Activated CD4-positive, alpha-beta memory T cell treated with anti-CD3 and anti-CD28 coated beads for 36 hours (primary cell): ENCODE measurements at regions of chr9 and their contacts with region 1.

Region 1: DNA sequence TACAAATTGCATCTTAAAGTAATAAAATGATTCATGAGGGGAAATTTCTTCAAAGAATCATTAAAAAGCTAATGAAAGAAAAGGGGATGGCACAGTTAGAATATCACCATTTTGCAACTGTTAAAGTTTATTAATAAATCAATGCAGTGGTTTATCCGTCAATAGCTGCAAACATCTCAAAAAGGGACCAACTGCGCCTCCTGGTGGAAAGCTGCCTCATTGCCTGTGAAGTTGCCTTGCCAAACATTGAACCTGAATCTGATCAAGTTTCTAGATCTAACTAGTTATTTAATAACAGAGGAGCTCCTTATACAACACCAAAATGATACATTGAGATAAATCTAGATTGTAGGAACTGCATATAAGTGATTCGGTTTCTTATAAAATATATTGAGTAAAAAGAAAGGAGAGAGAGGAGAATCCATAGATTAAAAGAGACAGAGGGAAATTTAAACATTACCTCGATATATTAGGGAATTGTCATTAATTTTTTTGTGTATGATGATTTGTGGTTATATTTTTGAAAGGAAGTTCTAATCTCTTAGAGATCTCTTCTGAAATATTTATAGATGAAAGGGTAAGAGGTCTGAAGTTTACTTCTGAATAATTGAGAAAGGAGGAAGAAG is 6.9 kb upstream of the NDUFB6 start:
- DNase-seq: peak; percentile 84
- H3K4me3 Mint-ChIP-seq: no peak overlapping the region
- H3K27ac Mint-ChIP-seq: no peak overlapping the region
- H3K4me1 Mint-ChIP-seq: no peaks in the 10 kb centered on the region
- H3K27me3 Mint-ChIP-seq: peaks cover 14% of the 10 kb centered on the region

Region 2: GRCh38 chr9:32350682-32351081 is 229.1 kb before region 1 on chr9:
- CTCF ChIA-PET with region 1: no interaction called
- POLR2A ChIA-PET with region 1: no interaction called
- intact Hi-C with region 1: no loop called
- DNase-seq: no peak
- H3K4me3 Mint-ChIP-seq: no peak overlapping the region
- H3K27ac Mint-ChIP-seq: no peak overlapping the region
- H3K4me1 Mint-ChIP-seq: no peaks in the 10 kb centered on the region
- H3K27me3 Mint-ChIP-seq: no peaks in the 10 kb centered on the region

Region 3: DNA sequence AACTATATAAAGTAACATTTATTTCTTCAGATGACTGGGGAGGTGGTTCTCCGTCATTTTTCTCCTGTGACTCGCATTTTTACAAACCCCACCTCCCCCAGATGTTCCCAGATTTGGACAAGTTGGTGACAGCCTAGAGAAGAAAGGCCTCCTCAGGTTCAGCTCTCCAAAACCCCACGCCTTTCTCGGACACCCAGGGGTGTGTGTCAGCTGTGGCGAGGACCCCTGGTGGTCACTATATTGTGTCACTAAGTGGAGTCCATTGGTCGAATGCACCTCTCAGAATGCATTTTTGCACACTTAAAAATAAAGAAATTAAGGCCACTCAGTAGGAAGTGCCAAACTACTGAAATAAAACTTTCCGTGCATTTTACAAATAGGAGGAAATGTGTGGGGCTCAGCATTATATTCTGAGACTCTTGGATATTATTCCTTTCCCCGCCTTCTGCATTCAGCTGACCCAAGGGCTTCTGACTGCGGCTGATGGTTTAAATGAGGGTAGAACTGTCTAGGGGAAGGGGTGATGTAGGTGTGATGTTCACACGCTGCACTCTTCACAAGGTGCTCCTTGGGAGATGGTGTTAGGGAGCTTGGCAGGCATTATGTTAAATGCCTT is 147.8 kb before region 1 on chr9:
- CTCF ChIA-PET with region 1: interaction called, 12 read pairs
- POLR2A ChIA-PET with region 1: no interaction called
- intact Hi-C with region 1: no loop called
- DNase-seq: peak; percentile 28
- H3K4me3 Mint-ChIP-seq: no peak overlapping the region
- H3K27ac Mint-ChIP-seq: no peak overlapping the region
- H3K4me1 Mint-ChIP-seq: no peaks in the 10 kb centered on the region
- H3K27me3 Mint-ChIP-seq: no peaks in the 10 kb centered on the region

Region 4: DNA sequence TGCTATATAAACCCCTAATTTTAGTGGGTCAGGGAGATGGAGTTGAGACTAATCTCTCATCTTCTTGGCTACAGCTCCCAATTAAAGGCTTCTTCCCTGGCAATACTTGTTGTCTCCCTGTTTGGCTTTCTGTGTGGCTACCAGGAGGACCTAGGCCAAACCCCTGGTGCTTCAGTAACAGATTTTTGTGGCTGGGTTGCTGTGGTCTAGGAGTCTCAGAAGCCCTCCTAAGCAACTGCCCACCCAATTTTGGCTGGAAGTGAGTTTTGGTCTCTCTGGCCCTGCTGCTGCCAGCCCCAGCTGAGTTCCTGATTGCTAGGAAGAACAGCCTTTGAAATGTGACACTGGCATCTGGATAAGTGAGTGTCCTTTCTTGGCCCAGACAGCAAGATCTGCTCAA is 63.6 kb before region 1 on chr9:
- CTCF ChIA-PET with region 1: no interaction called
- POLR2A ChIA-PET with region 1: no interaction called
- intact Hi-C with region 1: no loop called
- DNase-seq: no peak
- H3K4me3 Mint-ChIP-seq: no peak overlapping the region
- H3K27ac Mint-ChIP-seq: no peak overlapping the region
- H3K4me1 Mint-ChIP-seq: peaks cover 39% of the 10 kb centered on the region
- H3K27me3 Mint-ChIP-seq: no peaks in the 10 kb centered on the region

Region 5: DNA sequence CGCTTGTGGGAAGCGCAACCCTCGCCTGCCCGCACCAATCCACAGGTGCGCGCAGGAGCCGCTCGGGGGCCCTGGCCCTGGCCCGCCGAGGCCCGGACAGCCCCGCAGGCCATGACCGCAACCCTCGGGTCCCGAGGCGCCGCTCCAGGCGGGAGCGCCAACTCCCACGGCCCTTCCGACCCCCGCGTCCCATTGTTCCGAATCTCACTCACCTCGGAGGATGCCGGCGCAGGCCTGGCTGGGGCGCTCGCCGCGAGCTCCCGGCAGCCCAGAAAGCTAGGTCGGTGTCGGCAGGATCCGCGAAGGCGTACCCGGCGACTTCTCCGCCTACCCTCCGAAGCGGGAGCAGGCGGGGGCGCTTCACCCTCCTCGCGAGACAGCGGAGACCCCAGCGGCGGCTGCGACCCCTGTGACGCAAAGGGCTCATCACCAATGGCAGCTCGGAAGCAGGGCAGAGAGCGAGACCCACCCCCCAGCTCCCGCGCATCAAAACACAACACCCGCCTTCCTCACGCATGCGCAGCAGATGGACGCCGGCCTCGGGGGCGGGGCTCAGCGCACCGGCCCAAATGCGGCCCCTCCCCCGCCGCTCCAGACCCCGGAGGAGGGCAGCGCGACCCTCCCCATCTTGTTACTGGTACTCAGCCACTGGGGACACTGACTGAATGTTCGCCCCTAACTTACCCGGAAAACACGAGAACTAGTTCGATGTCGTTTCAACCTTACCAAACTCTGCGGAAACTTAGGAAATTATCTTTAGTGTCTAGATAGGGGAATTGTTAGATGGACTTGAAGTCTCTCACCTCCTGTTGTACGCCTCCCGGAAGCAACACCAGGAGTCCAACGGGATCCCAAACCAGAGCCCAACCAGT is 29.0 kb before region 1 on chr9:
- CTCF ChIA-PET with region 1: interaction called, 62 read pairs
- POLR2A ChIA-PET with region 1: no interaction called
- intact Hi-C with region 1: no loop called
- DNase-seq: peak; percentile 95
- H3K4me3 Mint-ChIP-seq: peak overlapping the region; percentile 99
- H3K27ac Mint-ChIP-seq: peak overlapping the region; percentile 100
- H3K4me1 Mint-ChIP-seq: peaks cover 48% of the 10 kb centered on the region
- H3K27me3 Mint-ChIP-seq: no peaks in the 10 kb centered on the region

Region 6: DNA sequence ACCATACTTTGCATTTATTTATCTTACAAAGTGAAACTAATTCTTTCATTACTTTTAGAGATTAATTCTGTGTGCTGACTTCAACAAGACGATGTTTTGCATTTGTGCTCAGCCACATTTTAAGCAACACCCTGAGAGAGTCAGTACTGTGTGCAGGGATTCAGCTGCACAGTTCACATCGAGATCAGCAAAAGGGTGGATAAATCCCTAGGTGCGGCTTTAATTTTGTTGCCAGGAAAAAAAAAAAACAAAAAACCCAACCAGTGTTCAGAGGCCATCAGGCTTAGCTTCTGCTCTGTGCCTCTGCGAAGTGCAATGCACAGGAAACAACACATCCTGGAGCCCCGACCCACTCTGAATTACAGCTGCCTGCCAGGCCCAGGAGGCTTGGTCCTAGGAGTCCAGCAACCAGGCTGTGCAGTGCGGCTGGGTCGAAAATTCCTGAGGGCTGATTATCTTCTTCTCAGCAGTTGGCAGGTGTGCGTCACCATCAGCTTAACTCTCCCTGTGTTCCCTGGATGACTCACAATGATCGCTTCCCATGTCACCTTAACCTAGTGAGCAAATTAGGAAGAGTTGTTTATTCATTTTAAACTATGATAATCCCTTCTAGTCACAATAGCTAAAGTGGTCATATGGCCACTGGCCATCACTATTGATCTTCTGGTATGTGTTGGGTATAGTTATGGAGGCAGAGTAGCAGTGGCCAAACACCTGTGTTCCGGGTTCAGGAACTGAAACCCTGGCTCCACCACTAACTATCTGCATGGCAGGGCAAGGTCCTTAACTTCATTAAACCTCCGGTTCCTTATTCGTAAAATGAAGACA is 24.3 kb after region 1 on chr9:
- CTCF ChIA-PET with region 1: interaction called, 12 read pairs
- POLR2A ChIA-PET with region 1: no interaction called
- intact Hi-C with region 1: no loop called
- DNase-seq: no peak
- H3K4me3 Mint-ChIP-seq: no peak overlapping the region
- H3K27ac Mint-ChIP-seq: no peak overlapping the region
- H3K4me1 Mint-ChIP-seq: no peaks in the 10 kb centered on the region
- H3K27me3 Mint-ChIP-seq: peaks cover 8% of the 10 kb centered on the region

Region 7: DNA sequence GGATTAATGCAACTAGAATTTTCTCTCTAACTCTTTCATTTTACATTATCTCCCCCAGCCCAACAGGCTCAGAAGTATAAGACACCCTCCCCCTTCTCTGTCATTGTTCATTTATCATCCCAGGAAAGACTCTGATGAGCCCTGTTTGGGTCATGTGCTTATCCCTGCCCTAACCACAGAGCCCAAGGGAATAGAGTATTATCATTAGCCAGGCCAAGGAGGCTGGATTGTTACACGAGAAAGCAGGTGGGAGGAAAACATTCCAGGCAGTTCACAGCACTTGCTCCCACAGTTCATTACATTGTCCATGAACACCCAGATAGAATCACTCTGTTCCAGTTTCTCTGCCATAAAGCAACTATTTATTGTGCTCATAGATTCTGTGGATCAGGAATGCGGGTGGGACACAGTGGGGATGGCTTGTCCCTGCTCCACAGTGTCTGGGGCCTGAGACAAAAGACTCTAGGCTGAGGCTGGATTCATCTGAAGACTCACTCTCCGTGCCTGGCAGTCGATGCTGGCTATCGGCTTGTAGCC is 144.0 kb after region 1 on chr9:
- CTCF ChIA-PET with region 1: no interaction called
- POLR2A ChIA-PET with region 1: no interaction called
- intact Hi-C with region 1: no loop called
- DNase-seq: no peak
- H3K4me3 Mint-ChIP-seq: no peak overlapping the region
- H3K27ac Mint-ChIP-seq: no peak overlapping the region
- H3K4me1 Mint-ChIP-seq: no peaks in the 10 kb centered on the region
- H3K27me3 Mint-ChIP-seq: peaks cover 2% of the 10 kb centered on the region

Region 8: DNA sequence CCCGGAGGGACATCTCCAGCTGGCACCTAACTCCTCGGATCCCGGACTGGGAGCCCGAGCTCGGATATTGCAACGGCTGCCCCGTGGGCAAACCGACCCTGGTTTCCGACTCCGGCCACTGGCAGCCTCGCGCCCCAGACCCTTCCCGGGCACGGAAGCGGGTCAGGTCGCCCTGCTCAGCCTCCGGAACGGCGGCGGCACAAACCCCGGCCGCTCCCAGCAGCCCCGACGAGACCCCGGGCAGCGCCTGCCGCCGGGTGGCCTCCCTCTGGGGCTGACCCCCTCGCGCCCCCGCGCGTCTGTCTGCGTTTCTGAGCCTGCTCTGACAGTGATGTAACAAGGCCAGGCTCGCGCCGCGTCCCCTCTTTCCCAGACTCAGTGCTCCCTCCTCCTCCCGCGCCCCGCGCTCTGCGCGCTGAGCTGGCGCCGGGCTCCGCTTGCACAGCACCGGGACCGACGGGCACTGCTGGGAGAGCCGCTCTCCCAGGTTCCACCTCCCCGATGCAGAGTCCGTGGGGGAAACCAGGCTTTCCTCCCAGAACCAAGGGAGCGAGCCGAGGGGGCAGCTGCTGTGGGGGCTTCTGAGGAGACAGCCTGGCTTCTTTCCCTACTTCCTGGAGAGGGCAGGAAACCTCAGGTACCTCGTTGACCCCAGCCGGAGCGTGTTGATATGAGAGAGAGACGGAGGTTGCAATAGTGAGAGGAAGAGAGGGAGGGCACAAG is 203.5 kb after region 1 on chr9 and contains the start of gene TMEM215:
- CTCF ChIA-PET with region 1: no interaction called
- POLR2A ChIA-PET with region 1: no interaction called
- intact Hi-C with region 1: no loop called
- DNase-seq: no peak
- H3K4me3 Mint-ChIP-seq: no peak within 1 kb of the TSS
- H3K27ac Mint-ChIP-seq: no peak within 1 kb of the TSS
- H3K4me1 Mint-ChIP-seq: no peaks in the 10 kb centered on the region
- H3K27me3 Mint-ChIP-seq: peaks cover 29% of the 10 kb centered on the region
- total RNA-seq, gene TMEM215: not detected

Region 9: DNA sequence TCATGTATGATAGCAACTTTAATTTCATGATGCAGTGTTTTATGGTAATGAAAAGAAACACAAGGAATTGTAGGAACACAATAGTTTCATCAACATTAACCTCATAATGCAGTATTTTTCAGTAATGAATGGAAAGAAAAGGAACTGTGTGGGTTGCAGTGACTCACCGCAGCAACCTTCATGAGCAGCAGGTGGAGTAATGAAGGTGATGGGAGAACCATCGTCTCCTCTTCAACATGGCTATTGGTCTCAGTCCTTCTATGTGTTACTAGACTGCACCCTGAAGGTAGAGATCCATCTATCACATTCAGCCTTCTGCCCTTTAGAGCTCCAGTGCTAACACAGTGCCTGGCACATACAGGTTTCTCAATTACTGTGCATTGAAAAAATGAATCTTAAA is 261.5 kb after region 1 on chr9:
- CTCF ChIA-PET with region 1: no interaction called
- POLR2A ChIA-PET with region 1: no interaction called
- intact Hi-C with region 1: loop called (anchors 10 kb)
- DNase-seq: no peak
- H3K4me3 Mint-ChIP-seq: no peak overlapping the region
- H3K27ac Mint-ChIP-seq: no peak overlapping the region
- H3K4me1 Mint-ChIP-seq: no peaks in the 10 kb centered on the region
- H3K27me3 Mint-ChIP-seq: peaks cover 4% of the 10 kb centered on the region